Thyroid gland (tissue), 4 donors: ENCODE measurements at regions of chr11 and their contacts with region 1.

Region 1: GRCh38 chr11:106785913-106786650 is 232.2 kb downstream of the GUCY1A2 start:
- DNase-seq: no peak
- H3K4me3 ChIP-seq: no peak overlapping the region
- H3K27ac ChIP-seq: no peak overlapping the region
- H3K4me1 ChIP-seq: no peaks in the 10 kb centered on the region
- H3K27me3 ChIP-seq: no peaks in the 10 kb centered on the region
- CTCF ChIP-seq: no peak
- POLR2A ChIP-seq: no peak

Region 2: DNA sequence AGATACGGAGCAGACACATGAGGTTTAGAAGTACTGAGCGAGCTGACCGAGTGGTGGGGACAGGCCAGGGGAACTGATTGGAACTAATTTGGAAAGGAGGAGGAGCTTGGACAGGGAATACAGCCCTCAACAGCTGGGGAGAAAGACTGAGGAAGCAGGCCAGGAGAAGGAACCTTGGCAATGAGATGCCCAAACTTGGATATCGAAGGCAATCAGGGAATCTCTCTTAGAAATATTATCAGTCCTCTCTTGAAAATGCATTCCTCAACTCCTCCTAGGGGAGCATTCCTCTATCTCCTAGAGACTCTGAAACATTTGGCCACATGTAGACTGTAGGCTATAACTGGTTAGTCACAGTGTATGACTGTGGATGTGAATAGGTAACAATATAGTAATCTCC is 52.4 kb before region 1 on chr11:
- intact Hi-C with region 1: no loop called
- DNase-seq: peak in 1 of 2 donors; percentile 27
- H3K4me3 ChIP-seq: no peak overlapping the region
- H3K27ac ChIP-seq: peak overlapping the region; percentile 60 to 84 (median 78)
- H3K4me1 ChIP-seq: peaks cover 12 to 20% of the 10 kb centered on the region in 2 donors
- H3K27me3 ChIP-seq: no peaks in the 10 kb centered on the region
- CTCF ChIP-seq: no peak
- POLR2A ChIP-seq: no peak

Region 3: GRCh38 chr11:106925245-106925644 is 139.2 kb after region 1 on chr11:
- intact Hi-C with region 1: loop called (anchors 5 kb)
- DNase-seq: no peak
- H3K4me3 ChIP-seq: no peak overlapping the region
- H3K27ac ChIP-seq: no peak overlapping the region
- H3K4me1 ChIP-seq: no peaks in the 10 kb centered on the region
- H3K27me3 ChIP-seq: no peaks in the 10 kb centered on the region
- CTCF ChIP-seq: no peak
- POLR2A ChIP-seq: no peak